ENCODE measurements at regions of chr17 and their contacts with region 1.

Region 1: GRCh38 chr17:36629252-36629847 is 28.0 kb downstream of the MRM1 start:
- DNase-seq: peak; percentile 99
- H3K4me3 Mint-ChIP-seq: no peak overlapping the region
- H3K27ac Mint-ChIP-seq: no peak overlapping the region
- H3K4me1 Mint-ChIP-seq: no peaks in the 10 kb centered on the region
- H3K27me3 Mint-ChIP-seq: peaks cover 53% of the 10 kb centered on the region
- CTCF ChIP-seq: peak; percentile 100

Region 2: GRCh38 chr17:35299129-35299528 is 1330.2 kb before region 1 on chr17:
- CTCF ChIA-PET with region 1: no interaction called
- intact Hi-C with region 1: no loop called
- DNase-seq: peak; percentile 87
- H3K4me3 Mint-ChIP-seq: peak overlapping the region; percentile 36
- H3K27ac Mint-ChIP-seq: peak overlapping the region; percentile 85
- H3K4me1 Mint-ChIP-seq: peaks cover 21% of the 10 kb centered on the region
- H3K27me3 Mint-ChIP-seq: no peaks in the 10 kb centered on the region
- CTCF ChIP-seq: no peak

Region 3: DNA sequence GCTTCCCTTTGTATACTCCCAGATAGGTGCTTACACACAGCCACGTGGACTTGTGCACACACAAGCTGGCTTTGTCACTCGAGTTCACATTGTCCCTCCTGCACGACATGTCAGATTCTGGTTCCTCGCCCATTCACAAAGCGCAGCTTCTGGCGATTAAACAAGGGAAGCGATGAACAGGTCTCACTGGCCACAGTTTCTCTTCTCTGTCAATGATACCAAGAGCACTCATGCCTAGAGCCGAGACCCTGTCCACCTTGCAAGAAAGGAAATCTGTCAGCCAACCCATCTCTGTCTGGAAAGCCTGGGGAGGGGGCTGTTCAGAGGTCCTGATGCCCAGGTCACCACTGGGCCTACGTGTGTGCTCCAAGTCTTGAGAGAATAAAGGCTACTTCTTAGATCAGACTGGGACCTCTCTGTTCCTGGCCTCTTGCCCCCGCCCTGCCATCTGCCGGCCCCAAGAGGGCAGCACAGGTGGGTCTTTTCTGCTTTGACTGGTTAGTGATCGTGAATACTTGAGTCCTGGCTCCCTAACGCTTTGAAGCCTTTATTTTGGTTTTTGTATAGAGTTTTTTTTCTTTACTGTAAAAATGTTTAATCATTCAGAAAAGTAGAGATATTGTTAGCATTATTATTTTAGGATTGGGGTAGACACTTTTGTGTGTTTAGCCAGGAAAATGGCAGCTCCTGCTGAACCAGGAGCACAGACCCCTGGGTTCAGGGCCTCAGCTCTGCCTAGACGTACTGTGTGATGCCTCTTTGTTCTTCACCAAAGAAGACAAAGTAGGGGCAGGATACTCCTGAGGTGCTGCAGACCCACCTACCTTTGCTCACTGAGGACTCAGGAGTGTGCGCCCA is 76.8 kb after region 1 on chr17:
- CTCF ChIA-PET with region 1: interaction called, 18 read pairs
- intact Hi-C with region 1: loop called (anchors 2 kb)
- DNase-seq: peak; percentile 90
- H3K4me3 Mint-ChIP-seq: no peak overlapping the region
- H3K27ac Mint-ChIP-seq: no peak overlapping the region
- H3K4me1 Mint-ChIP-seq: no peaks in the 10 kb centered on the region
- H3K27me3 Mint-ChIP-seq: peaks cover 93% of the 10 kb centered on the region
- CTCF ChIP-seq: peak; percentile 99

Region 4: GRCh38 chr17:36849871-36850348 is 220.6 kb after region 1 on chr17:
- CTCF ChIA-PET with region 1: interaction called, 3 read pairs
- intact Hi-C with region 1: loop called (anchors 10 kb)
- DNase-seq: peak; percentile 50
- H3K4me3 Mint-ChIP-seq: no peak overlapping the region
- H3K27ac Mint-ChIP-seq: no peak overlapping the region
- H3K4me1 Mint-ChIP-seq: peaks cover 16% of the 10 kb centered on the region
- H3K27me3 Mint-ChIP-seq: peaks cover 38% of the 10 kb centered on the region
- CTCF ChIP-seq: peak; percentile 59

Region 5: DNA sequence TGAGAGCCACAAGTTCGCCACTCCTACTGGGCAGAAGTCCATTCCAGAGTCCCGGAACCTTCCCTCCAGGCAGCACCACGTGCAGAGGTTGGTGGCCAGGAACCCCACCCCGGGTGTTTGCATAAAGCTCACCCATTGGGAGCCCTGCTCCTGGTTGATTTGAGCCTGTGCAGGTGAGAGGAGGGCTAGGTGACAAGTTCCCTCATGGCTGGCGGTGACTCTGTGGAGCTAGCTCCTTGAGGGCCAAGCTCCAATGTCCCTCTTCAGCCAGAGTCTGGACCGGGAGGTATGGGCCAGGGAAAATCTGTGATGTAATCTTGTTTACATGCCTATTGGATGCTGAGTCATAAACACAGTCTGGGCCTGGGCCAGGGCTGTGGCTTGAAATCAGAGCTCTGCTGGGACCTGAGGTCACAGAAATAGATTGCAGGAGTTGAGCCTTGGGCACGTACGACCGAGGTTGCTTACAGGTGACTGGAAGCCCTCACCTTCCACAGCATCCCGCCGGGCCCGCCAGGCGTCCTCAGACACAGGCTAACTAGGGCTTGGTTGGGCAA is 438.3 kb after region 1 on chr17:
- CTCF ChIA-PET with region 1: interaction called, 6 read pairs
- intact Hi-C with region 1: loop called (anchors 5 kb)
- DNase-seq: peak; percentile 94
- H3K4me3 Mint-ChIP-seq: peak overlapping the region; percentile 38
- H3K27ac Mint-ChIP-seq: peak overlapping the region; percentile 12
- H3K4me1 Mint-ChIP-seq: peaks cover 19% of the 10 kb centered on the region
- H3K27me3 Mint-ChIP-seq: peaks cover 47% of the 10 kb centered on the region
- CTCF ChIP-seq: no peak

Measured in Calu3 (cell line).